ENCODE measurements at regions of chr6 and their contacts with region 1.

Region 1: DNA sequence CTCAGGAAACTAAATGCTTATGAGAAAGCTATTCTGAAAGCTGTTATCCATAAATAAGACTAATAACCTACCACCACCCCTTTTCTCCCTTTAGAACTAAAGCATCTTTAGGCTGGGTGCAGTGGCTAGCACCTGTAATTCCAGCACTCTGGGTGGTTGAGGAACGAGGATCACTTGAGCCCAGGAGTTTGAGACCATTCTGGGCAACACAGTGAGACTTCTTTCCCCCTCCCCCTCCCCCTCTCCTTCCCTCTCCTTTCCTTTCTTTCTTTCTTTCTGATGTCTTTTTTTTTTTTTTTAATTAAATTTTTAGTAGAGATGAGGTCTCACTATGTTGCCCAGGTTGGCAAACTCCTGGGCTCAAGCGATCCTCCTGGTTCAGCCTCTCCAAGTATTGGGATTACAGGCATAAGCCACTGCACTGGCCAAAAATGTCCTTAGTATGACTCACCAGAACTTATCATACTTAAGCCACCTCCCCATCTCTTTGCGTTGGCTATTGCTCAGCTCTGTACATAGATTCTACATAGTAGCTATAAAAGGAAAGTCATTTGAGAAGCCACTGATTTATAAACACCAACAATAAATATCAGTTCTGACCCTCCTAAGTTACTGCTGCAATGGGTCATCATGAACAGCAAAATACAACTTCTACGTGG is 54.8 kb upstream of the SPDEF start:
- DNase-seq: peak; percentile 59
- H3K4me3 ChIP-seq: no peak overlapping the region
- H3K27ac ChIP-seq: peak overlapping the region; percentile 49
- H3K27me3 ChIP-seq: no peaks in the 10 kb centered on the region
- CTCF ChIP-seq: no peak

Region 2: GRCh38 chr6:34196126-34196830 is 414.7 kb before region 1 on chr6:
- CTCF ChIA-PET with region 1: interaction called, 37 read pairs
- POLR2A ChIA-PET with region 1: interaction called, 3 read pairs
- DNase-seq: peak; percentile 11
- H3K4me3 ChIP-seq: peak overlapping the region; percentile 54
- H3K27ac ChIP-seq: no peak overlapping the region
- H3K27me3 ChIP-seq: no peaks in the 10 kb centered on the region
- CTCF ChIP-seq: peak; percentile 89

Region 3: DNA sequence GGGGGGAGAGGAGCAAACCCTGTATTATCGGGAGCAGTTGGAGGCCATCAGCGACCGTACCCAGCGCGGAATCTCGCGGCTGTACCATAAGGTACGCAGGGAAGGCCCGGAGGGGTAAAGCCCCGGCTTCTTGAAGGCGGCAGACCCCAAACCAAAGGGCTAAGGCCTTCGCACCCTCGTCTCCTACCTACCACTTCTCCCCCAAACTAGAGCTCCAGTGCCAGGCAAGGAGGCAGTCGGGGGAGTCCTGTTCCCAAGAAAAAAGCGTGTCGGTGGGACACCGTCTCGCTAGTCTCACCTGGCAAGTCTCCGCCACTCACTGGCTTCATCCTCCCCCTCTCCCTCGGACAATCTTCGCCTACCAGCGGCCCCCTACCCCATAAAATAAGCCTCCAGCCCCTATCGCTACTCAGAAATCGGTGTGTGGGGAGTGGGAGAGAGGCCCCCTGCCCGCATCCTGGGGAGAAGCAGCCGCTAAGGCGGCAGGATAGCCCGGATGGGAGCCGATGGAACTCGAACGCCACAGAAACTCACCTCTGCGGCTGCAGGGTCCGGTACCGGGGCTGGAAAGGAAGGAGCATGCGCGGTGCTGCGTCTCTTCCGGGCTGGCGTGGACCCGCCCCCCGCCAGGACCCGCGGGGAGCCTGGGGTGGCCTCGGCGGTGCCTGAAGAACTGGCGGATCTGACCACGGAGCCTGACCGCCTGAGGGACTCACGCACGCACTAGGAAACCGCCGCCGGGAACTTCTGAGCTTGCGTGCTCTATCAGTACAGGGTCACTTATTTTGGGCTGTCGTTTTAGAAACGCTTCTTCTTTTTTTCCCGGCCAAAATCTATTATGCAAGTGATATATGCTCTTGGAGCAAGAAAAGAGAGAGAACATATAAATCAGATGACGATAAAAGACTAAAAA is 185.2 kb before region 1 on chr6 and contains the start of gene RPS10:
- CTCF ChIA-PET with region 1: interaction called, 11 read pairs
- POLR2A ChIA-PET with region 1: interaction called, 4 read pairs
- DNase-seq: peak; percentile 75
- H3K4me3 ChIP-seq: peak within 1 kb of the TSS; percentile 99
- H3K27ac ChIP-seq: peak within 1 kb of the TSS; percentile 65
- H3K27me3 ChIP-seq: no peaks in the 10 kb centered on the region
- CTCF ChIP-seq: no peak; the same call in 1 of the 2 replicates
- polyA plus RNA-seq, gene RPS10: 2,426 and 3,003 TPM in 2 replicates

Region 4: GRCh38 chr6:34526992-34527728 is 83.8 kb before region 1 on chr6:
- CTCF ChIA-PET with region 1: interaction called, 22 read pairs
- POLR2A ChIA-PET with region 1: no interaction called
- DNase-seq: peak; percentile 70
- H3K4me3 ChIP-seq: peak overlapping the region; percentile 46
- H3K27ac ChIP-seq: no peak overlapping the region
- H3K27me3 ChIP-seq: peaks cover 6% of the 10 kb centered on the region
- CTCF ChIP-seq: peak; percentile 69

Region 5: GRCh38 chr6:34645627-34646026 is 34.7 kb after region 1 on chr6:
- CTCF ChIA-PET with region 1: no interaction called
- POLR2A ChIA-PET with region 1: interaction called, 15 read pairs
- DNase-seq: no peak
- H3K4me3 ChIP-seq: no peak overlapping the region
- H3K27ac ChIP-seq: no peak overlapping the region
- H3K27me3 ChIP-seq: no peaks in the 10 kb centered on the region
- CTCF ChIP-seq: no peak